ENCODE measurements at regions of chr18 and their contacts with region 1.

Region 1: DNA sequence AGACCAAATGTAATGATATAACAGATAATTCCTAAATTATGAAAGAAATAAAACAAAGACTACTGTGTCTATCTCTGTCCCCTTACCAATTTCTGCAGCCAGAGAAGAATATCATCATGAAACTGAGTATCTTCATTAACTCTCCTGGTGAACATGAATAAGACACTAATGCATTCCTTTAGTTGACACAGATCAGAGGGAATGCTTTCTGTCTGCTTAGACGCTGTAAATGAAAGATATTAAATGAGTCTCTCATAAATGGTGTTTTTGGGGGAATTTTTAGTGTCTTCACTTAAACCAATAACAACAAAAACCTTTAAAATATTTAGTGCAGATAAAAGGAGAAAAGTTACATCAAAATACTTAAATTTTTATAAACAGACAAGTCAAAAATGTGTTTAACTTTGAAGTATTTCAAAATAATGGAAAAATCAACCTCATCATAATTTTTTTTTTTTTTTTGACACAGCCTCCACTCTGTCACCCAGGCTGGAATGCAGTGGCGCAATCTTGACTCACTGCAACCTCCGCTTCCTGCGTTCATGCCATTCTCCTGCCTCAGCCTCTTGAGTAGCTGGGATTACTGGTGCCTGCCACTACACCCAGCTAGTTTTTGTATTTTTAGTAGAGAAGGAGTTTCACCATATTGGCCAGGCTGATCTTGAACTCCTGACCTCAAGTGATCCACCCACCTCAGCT is 16.0 kb downstream of the EPG5 start:
- DNase-seq: no peak
- ATAC-seq: no peak
- H3K4me3 ChIP-seq: no peak overlapping the region
- H3K27ac ChIP-seq: no peak overlapping the region
- H3K4me1 ChIP-seq: peaks cover 0 to 11% (median 0%) of the 10 kb centered on the region in 9 donors
- H3K27me3 ChIP-seq: no peaks in the 10 kb centered on the region
- CTCF ChIP-seq: no peak

Region 2: DNA sequence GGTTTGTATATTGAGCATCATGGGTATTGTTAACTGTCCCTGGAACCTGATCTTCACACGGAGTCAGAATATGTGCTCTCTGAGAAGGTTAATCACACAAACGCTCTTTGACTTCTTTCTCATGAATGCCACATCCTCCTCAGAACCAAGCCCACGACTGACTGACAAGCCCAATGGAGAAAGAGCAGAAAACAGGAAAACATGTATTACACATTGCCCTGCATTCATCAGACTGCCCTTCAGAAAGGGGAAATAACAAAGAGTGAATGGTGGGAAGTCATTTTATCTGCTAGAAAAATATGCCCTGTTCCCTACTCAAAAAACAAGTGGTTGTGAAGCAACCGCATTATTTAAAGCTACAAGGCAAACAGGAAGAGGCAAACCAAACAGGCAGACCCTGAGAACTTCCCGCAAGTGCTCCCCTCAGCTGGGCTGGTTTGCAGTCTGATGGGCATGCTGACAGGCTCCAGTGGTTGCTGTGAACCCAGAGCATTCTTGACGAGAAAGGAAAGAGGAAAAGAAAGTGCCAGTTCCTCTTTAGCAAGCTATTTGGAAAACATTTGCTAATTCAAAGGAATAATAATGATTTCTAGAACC is 1443.3 kb before region 1 on chr18:
- intact Hi-C with region 1: no loop called
- DNase-seq: peak; percentile 25 to 32
- ATAC-seq: peak; percentile 26 to 92 (median 73)
- H3K4me3 ChIP-seq: no peak overlapping the region
- H3K27ac ChIP-seq: peak overlapping the region in 1 of 10 donors; percentile 68
- H3K4me1 ChIP-seq: peaks cover 0 to 18% (median 0%) of the 10 kb centered on the region in 9 donors
- H3K27me3 ChIP-seq: no peaks in the 10 kb centered on the region
- CTCF ChIP-seq: no peak

Region 3: GRCh38 chr18:45890606-45891005 is 60.6 kb before region 1 on chr18:
- intact Hi-C with region 1: no loop called
- DNase-seq: peak in 1 of 2 donors; percentile 7
- ATAC-seq: peak in 1 of 8 donors; percentile 24
- H3K4me3 ChIP-seq: no peak overlapping the region
- H3K27ac ChIP-seq: peak overlapping the region in 1 of 10 donors; percentile 73
- H3K4me1 ChIP-seq: peaks cover 0 to 18% (median 0%) of the 10 kb centered on the region in 9 donors
- H3K27me3 ChIP-seq: no peaks in the 10 kb centered on the region
- CTCF ChIP-seq: no peak

Region 4: DNA sequence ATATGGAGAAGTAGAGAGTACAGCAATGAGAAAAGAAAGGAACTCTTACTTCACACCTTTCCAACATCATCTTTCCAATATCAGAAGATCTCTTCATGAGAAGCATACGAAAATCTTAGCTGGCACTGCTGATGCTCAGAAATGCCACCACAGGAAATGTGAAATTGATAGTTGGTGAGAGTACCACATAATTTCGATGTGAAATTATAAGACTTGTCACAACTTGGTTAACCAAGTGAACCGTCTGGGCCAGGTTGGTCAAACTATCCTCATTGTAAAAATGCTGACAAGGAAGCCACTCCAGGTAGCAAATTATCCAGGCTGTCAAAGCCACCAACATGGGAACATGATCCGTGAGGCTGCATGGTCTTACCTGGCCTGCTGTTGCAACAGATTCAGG is 50.5 kb before region 1 on chr18:
- intact Hi-C with region 1: loop called in 1 of 10 experiments (anchors 10 kb)
- DNase-seq: no peak
- ATAC-seq: no peak
- H3K4me3 ChIP-seq: no peak overlapping the region
- H3K27ac ChIP-seq: no peak overlapping the region
- H3K4me1 ChIP-seq: no peaks in the 10 kb centered on the region
- H3K27me3 ChIP-seq: no peaks in the 10 kb centered on the region
- CTCF ChIP-seq: no peak

Region 5: DNA sequence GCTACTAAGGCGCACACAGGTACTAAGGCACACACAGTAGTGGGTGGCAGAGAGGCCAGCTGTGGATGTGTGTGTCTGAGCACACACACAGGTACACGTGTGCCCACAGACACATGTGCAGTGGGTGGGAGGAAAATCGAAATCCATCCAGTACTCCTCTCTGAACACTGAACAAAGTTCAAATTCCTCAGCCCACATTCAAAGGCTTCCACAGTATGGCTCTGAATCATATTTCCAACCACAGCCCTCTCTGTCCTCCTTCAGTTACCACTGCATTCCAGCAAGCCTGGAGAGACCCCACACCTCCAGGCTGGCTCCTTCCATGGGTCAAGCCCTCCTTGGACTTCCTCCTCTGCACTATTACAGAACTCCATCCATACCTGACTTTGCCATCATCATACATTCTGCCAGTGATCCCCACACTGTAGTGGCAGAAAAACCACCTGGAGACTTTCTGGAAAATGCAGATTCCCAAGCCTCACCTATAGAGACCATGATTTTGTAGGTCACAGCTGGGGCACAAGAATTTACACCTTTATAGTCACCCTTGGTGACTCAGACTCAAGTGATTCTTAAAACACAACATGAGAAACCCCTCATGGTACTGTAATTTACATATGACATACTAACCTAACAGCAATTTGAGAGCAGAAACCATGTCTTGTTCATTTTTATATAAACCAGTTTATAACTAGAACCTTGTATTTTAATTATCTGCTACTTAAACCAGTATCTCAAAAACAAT is 15.4 kb before region 1 on chr18:
- intact Hi-C with region 1: loop called in 1 of 10 experiments (anchors 1 kb)
- DNase-seq: no peak
- ATAC-seq: no peak
- H3K4me3 ChIP-seq: no peak overlapping the region
- H3K27ac ChIP-seq: no peak overlapping the region
- H3K4me1 ChIP-seq: peaks cover 0 to 17% (median 0%) of the 10 kb centered on the region in 9 donors
- H3K27me3 ChIP-seq: no peaks in the 10 kb centered on the region
- CTCF ChIP-seq: no peak

Region 6: GRCh38 chr18:46097801-46098615 is 146.8 kb after region 1 on chr18 and contains the start of gene ATP5F1A:
- intact Hi-C with region 1: no loop called
- DNase-seq: peak; percentile 83 to 95
- ATAC-seq: peak; percentile 90 to 95 (median 92)
- H3K4me3 ChIP-seq: peak within 1 kb of the TSS; percentile 72 to 100 (median 86)
- H3K27ac ChIP-seq: peak within 1 kb of the TSS; percentile 87 to 98 (median 95)
- H3K4me1 ChIP-seq: peaks cover 0 to 51% (median 44%) of the 10 kb centered on the region in 9 donors
- H3K27me3 ChIP-seq: no peaks in the 10 kb centered on the region
- CTCF ChIP-seq: peak in 3 of 9 donors; percentile 9 to 20 (median 11)
- total RNA-seq, gene ATP5F1A: 1,431 to 2,460 (median 2,025) TPM

Region 7: GRCh38 chr18:46497129-46497528 is 546.0 kb after region 1 on chr18:
- intact Hi-C with region 1: no loop called
- DNase-seq: peak; percentile 15 to 37
- ATAC-seq: no peak
- H3K4me3 ChIP-seq: no peak overlapping the region
- H3K27ac ChIP-seq: no peak overlapping the region
- H3K4me1 ChIP-seq: no peaks in the 10 kb centered on the region
- H3K27me3 ChIP-seq: no peaks in the 10 kb centered on the region
- CTCF ChIP-seq: no peak

Measured in heart right ventricle (tissue), 16 donors.